ENCODE measurements at regions of chr1 and their contacts with region 1.

Region 1: GRCh38 chr1:164637461-164638375 is 78.7 kb downstream of the PBX1 start:
- DNase-seq: peak; percentile 74
- ATAC-seq: peak; percentile 73

Region 2: DNA sequence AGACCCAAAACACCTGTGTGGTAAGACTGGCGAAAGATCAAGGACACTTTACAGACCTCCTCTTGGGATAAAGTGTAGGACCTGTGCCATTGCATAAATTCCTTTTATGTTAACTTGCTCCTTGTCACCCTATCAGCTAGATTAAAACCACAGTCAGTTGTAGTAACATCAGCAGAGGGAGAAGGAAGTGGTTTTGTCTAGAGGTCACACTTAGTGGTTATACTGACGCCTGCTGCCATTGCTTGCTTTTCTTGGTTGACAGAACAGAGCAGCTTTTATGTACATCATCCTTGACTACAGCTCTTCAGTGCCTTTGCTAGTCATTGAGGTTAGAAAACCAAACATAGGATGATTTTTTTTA is 22.7 kb after region 1 on chr1:
- intact Hi-C with region 1: no loop called
- DNase-seq: no peak
- ATAC-seq: peak; percentile 30

Region 3: DNA sequence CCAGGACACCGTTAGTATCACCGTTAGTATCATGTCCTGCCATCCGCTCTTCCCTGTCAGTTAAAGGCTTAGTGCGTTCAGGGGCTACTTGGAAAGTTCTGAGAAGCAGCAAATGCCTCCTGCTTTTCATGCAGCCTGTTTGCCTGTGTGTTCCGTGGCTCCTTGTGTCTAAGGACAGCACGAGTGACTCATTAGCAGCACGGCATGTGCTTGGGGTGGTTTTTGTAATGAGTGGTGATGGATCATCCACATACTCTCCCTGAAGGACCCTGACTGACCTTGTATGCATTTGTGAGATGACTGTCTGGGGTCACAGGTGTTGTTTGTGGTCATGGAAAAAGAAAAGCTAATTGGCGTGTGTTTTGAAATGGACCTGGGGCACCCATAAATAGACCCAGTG is 143.1 kb after region 1 on chr1:
- intact Hi-C with region 1: loop called (anchors 1 kb)
- DNase-seq: no peak
- ATAC-seq: peak; percentile 81

Measured in Right ventricle myocardium inferior (tissue), 1 donor.